Endothelial cell of umbilical vein (primary cell): ENCODE measurements at regions of chr12 and their contacts with region 1.

Region 1: GRCh38 chr12:131132118-131132892 is 178.6 kb downstream of the ADGRD1 start:
- DNase-seq: no peak
- H3K4me3 ChIP-seq: no peak overlapping the region
- H3K27ac ChIP-seq: no peak overlapping the region
- H3K4me1 ChIP-seq: no peaks in the 10 kb centered on the region
- H3K27me3 ChIP-seq: no peaks in the 10 kb centered on the region
- CTCF ChIP-seq: peak; percentile 43 to 54
- POLR2A ChIP-seq: no peak

Region 2: GRCh38 chr12:130761537-130762318 is 370.6 kb before region 1 on chr12:
- CTCF ChIA-PET with region 1: no interaction called
- POLR2A ChIA-PET with region 1: no interaction called
- dilution Hi-C with region 1: no loop called
- intact Hi-C with region 1: loop called (anchors 10 kb)
- DNase-seq: no peak
- H3K4me3 ChIP-seq: no peak overlapping the region
- H3K27ac ChIP-seq: no peak overlapping the region
- H3K4me1 ChIP-seq: no peaks in the 10 kb centered on the region
- H3K27me3 ChIP-seq: no peaks in the 10 kb centered on the region
- CTCF ChIP-seq: peak in 1 of 2 donors; percentile 35
- POLR2A ChIP-seq: no peak

Region 3: DNA sequence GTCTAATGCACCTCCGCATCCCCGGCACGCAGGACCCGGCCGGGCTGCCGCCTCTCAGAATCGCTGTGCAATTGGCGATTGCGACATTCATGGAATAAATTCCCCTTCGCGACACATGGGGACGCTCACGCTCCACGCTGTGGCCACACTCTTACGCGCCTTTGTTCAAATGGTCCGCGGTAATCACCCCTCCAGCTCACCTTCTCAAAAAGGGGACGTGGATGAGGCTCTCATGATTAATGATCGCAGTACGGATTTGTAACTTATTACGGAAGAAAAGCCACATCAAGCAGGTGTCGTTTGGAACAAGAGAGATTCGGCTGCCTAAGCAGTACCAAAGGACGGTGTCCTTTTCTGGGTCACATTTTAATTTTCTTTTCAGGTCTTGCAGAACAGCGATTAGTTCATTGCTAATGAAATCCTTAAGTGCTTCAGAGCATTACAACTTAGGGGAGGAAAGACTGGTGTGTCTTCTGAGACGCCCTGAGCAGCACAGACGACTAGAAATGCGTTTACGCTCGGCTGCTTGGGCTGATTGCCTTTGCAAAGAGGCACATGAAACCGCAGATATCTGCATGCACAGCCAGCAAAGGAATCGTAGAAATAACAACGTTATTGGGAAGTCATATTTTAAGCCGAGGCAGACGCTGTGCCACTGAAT is 215.9 kb before region 1 on chr12:
- CTCF ChIA-PET with region 1: no interaction called
- POLR2A ChIA-PET with region 1: no interaction called
- dilution Hi-C with region 1: no loop called
- intact Hi-C with region 1: loop called (anchors 2 kb)
- DNase-seq: peak; percentile 6
- H3K4me3 ChIP-seq: no peak overlapping the region
- H3K27ac ChIP-seq: no peak overlapping the region
- H3K4me1 ChIP-seq: no peaks in the 10 kb centered on the region
- H3K27me3 ChIP-seq: no peaks in the 10 kb centered on the region
- CTCF ChIP-seq: peak; percentile 43 to 46
- POLR2A ChIP-seq: no peak

Region 4: GRCh38 chr12:131104463-131105350 is 27.6 kb before region 1 on chr12:
- CTCF ChIA-PET with region 1: no interaction called
- POLR2A ChIA-PET with region 1: no interaction called
- dilution Hi-C with region 1: no loop called
- intact Hi-C with region 1: loop called (anchors 1 kb)
- DNase-seq: peak; percentile 28
- H3K4me3 ChIP-seq: no peak overlapping the region
- H3K27ac ChIP-seq: no peak overlapping the region
- H3K4me1 ChIP-seq: no peaks in the 10 kb centered on the region
- H3K27me3 ChIP-seq: no peaks in the 10 kb centered on the region
- CTCF ChIP-seq: peak; percentile 82 to 87
- POLR2A ChIP-seq: no peak

Region 5: GRCh38 chr12:131177599-131177998 is 45.3 kb after region 1 on chr12:
- CTCF ChIA-PET with region 1: no interaction called
- POLR2A ChIA-PET with region 1: no interaction called
- dilution Hi-C with region 1: no loop called
- intact Hi-C with region 1: no loop called
- DNase-seq: no peak
- H3K4me3 ChIP-seq: no peak overlapping the region
- H3K27ac ChIP-seq: no peak overlapping the region
- H3K4me1 ChIP-seq: no peaks in the 10 kb centered on the region
- H3K27me3 ChIP-seq: no peaks in the 10 kb centered on the region
- CTCF ChIP-seq: no peak
- POLR2A ChIP-seq: no peak